ENCODE measurements at regions of chr14 and their contacts with region 1.

Region 1: GRCh38 chr14:63624203-63624602 is 17.5 kb downstream of the WDR89 start:
- DNase-seq: no peak
- ATAC-seq: no peak

Region 2: GRCh38 chr14:63388763-63389431 is 235.3 kb before region 1 on chr14:
- intact Hi-C with region 1: loop called in 1 of 2 experiments (anchors 10 kb)
- DNase-seq: peak; percentile 63
- ATAC-seq: peak; percentile 81 to 91

Region 3: GRCh38 chr14:63435838-63436237 is 188.4 kb before region 1 on chr14:
- intact Hi-C with region 1: no loop called
- DNase-seq: peak; percentile 50
- ATAC-seq: peak; percentile 85 to 86